K562 (cell line): ENCODE measurements at regions of chr7 and their contacts with region 1.

Region 1: DNA sequence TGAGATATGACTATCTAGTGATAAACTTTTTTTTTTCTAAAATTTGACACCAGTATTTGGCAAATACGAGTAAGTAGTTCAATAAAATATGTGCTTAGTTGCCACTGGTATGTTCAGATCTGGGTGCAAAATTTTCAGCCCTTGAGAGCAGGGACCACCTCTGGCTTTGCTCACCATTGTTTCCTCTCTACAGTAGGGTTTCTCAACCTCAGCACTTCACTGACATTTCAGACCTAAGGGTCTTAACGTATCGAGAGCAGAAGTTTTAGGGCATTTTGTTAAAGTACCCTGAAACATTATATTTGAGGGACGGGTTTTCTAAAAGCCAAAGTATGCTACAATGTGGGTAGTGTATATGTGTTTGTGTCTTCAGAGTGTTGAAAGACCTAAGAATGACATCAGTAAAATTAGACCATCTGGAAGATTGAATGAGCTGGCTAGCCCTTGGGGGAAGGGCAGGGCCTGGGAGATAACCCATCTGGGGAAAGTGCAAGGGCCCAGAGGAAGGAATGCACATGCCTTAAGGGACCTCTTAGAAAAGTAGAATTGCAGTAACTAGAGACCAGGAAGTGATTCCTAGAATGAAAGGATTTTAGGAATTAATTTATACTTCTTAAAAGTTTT is 11.8 kb downstream of the BZW2 start:
- DNase-seq: peak; percentile 55 to 91 (median 74)
- ATAC-seq: peak; percentile 84
- H3K4me3 ChIP-seq: no peak overlapping the region
- H3K27ac ChIP-seq: peak overlapping the region; percentile 82
- H3K4me1 ChIP-seq: peaks cover 11 to 54% of the 10 kb centered on the region in 2 experiments
- H3K27me3 ChIP-seq: no peaks in the 10 kb centered on the region
- CTCF ChIP-seq: 0 out of 6 replicates have a peak, but pooled peaks of 1 of the 3 experiments have one; percentile 24
- EP300 ChIP-seq: peak; percentile 86
- POLR2A ChIP-seq: no peak
- RAD21 ChIP-seq: 0 out of 4 replicates have a peak, but pooled peaks of 1 of the 2 experiments have one; percentile 8

Region 2: DNA sequence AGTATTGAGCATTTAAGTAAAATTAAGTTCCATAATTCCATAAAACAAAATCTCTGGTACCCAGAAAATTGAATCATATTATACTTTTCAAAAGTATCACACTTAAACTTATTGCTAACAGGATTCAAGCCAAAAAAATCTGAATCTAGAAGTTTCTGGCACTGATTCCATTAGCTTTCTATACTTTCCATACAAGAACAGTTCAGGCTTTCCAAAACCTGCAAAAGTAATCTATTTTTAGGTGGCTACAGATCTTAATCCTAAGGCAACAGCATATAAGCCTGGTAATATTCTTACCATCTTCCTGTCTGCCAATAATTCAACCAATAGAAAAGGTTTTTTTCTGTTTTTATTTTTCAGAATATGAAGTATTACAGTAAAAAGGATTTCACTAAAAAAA is 421.4 kb before region 1 on chr7:
- CTCF ChIA-PET with region 1: no interaction called
- POLR2A ChIA-PET with region 1: no interaction called
- in situ Hi-C with region 1: no loop called
- intact Hi-C with region 1: no loop called
- DNase-seq: no peak
- ATAC-seq: no peak
- H3K4me3 ChIP-seq: no peak overlapping the region
- H3K27ac ChIP-seq: no peak overlapping the region
- H3K4me1 ChIP-seq: peaks cover 0 to 10% of the 10 kb centered on the region in 2 experiments; a peak in 2 of 5 replicates
- H3K27me3 ChIP-seq: no peaks in the 10 kb centered on the region
- CTCF ChIP-seq: no peak
- EP300 ChIP-seq: no peak
- POLR2A ChIP-seq: no peak
- RAD21 ChIP-seq: no peak

Region 3: DNA sequence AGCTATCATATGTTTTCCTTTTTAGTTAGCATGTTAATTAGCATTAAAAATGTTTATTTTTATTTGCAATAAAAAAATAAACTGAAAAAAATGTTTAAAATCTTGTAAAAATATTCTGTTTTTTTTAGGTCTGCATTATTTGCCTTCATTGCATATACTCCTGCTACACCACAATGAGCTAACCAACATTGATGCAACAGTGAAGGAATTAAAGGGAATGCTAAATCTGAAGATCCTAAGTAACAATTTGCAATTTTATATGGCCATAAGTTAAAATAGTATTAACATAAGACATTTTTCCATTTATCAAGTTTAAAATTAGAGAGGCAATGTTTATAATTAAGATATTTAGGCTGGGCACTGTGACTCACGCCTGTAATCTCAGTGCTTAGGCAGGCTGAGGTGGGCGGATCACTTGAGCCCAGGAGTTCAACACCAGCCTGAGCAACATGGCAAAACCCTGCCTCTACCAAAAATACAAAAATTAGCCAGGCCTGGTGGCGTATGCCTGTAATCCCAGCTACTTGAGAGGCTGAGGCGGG is 98.9 kb before region 1 on chr7:
- CTCF ChIA-PET with region 1: no interaction called
- POLR2A ChIA-PET with region 1: no interaction called
- in situ Hi-C with region 1: no loop called
- intact Hi-C with region 1: no loop called
- DNase-seq: no peak
- ATAC-seq: no peak
- H3K4me3 ChIP-seq: no peak overlapping the region
- H3K27ac ChIP-seq: no peak overlapping the region
- H3K4me1 ChIP-seq: peaks cover 0 to 2% of the 10 kb centered on the region in 2 experiments; a peak in 2 of 5 replicates
- H3K27me3 ChIP-seq: no peaks in the 10 kb centered on the region
- CTCF ChIP-seq: no peak
- EP300 ChIP-seq: no peak
- POLR2A ChIP-seq: no peak
- RAD21 ChIP-seq: no peak

Region 4: DNA sequence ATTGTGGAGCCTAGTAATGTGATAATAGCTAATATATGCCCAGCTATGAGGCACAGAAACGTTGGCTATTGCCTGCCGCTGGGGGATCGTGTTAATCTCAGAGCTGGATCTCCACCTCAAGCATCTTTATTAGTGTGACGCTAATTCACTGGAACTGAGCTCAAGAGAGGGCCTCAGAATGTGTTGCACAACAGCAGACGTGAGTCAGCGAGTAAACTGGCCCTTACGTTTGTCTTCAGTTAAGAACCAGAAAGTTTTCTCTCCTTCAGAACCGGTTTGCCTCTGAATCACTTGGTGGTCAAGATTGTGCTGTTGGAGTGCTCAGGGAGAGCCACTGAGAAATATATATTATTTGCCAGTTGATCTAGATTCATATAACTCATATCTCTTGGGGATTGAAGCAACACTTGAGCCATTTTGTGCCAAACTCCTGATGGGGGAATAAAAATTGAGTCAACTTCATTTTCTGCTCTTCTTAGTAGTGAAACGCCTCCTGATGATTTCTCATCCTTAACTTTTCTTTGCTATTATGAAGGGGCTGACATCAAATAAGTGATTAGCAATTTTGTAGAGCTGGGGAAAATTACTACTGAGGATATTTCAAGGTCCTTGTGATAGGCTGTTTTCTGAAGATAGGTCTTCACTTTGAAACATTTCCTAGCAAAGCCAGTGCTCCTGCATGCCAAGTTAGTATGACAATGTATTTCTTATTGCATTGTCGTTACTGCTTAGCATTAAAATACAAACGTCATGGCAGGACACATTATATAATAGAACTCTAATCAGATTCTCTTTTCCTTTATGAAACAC is 10.5 kb after region 1 on chr7:
- CTCF ChIA-PET with region 1: no interaction called
- POLR2A ChIA-PET with region 1: interaction called, 13 read pairs
- in situ Hi-C with region 1: no loop called
- intact Hi-C with region 1: no loop called
- DNase-seq: peak in 3 of 4 experiments; percentile 29 to 83 (median 72)
- ATAC-seq: peak; percentile 83
- H3K4me3 ChIP-seq: no peak overlapping the region
- H3K27ac ChIP-seq: peak overlapping the region; percentile 77
- H3K4me1 ChIP-seq: peaks cover 0 to 17% of the 10 kb centered on the region in 2 experiments; a peak in 3 of 5 replicates
- H3K27me3 ChIP-seq: no peaks in the 10 kb centered on the region
- CTCF ChIP-seq: peak in 1 of 3 experiments; percentile 10; a peak in 1 of 6 replicates
- EP300 ChIP-seq: peak; percentile 74
- POLR2A ChIP-seq: no peak
- RAD21 ChIP-seq: peak in 1 of 2 experiments; percentile 25; a peak in 1 of 4 replicates

Region 5: GRCh38 chr7:16739863-16740622 is 82.3 kb after region 1 on chr7:
- CTCF ChIA-PET with region 1: no interaction called
- POLR2A ChIA-PET with region 1: no interaction called
- in situ Hi-C with region 1: no loop called
- intact Hi-C with region 1: loop called (anchors 5 kb)
- DNase-seq: peak; percentile 70 to 94 (median 82)
- ATAC-seq: peak; percentile 93
- H3K4me3 ChIP-seq: no peak overlapping the region
- H3K27ac ChIP-seq: peak overlapping the region; percentile 77
- H3K4me1 ChIP-seq: peaks cover 31 to 47% of the 10 kb centered on the region in 2 experiments
- H3K27me3 ChIP-seq: no peaks in the 10 kb centered on the region
- CTCF ChIP-seq: no peak
- EP300 ChIP-seq: peak; percentile 94
- POLR2A ChIP-seq: no peak
- RAD21 ChIP-seq: peak; percentile 25 to 26; a peak in 1 of 4 replicates